ENCODE measurements at regions of chr3 and their contacts with region 1.

Region 1: DNA sequence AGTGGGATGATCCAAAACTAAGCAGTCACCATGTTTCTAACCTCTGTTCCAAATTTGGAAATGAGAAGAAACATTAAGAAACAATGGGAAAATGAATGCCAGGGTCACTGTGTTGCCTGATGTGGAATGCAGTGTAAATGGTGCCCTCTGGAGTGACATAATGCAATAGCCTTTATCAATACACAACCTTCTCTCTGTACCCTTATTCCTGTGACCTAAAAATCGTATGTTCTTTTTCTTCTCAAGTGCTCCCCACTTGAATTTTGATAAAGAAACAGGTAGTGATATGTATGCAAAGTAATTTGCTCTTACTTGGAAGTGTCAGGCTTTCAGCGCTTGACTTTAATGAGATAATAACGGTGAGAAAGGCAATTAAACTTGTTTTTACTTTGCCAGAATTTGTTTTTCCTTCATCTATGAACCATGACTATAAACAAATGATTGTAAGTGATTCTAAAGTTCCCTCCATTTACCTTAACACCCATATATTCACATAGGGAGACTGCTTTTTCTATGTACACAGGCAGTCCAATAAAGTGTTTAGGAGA is 145.8 kb upstream of the THRB start:
- DNase-seq: no peak
- H3K4me3 ChIP-seq: no peak overlapping the region
- H3K27ac ChIP-seq: no peak overlapping the region
- H3K4me1 ChIP-seq: peaks cover 0 to 16% (median 2%) of the 10 kb centered on the region in 4 donors
- H3K27me3 ChIP-seq: peaks cover 29% of the 10 kb centered on the region
- CTCF ChIP-seq: peak; percentile 35 to 66 (median 43)
- EP300 ChIP-seq: no peak
- POLR2A ChIP-seq: no peak

Region 2: GRCh38 chr3:24662449-24663345 is 22.3 kb after region 1 on chr3:
- in situ Hi-C with region 1: no loop called
- intact Hi-C with region 1: loop called (anchors 1 kb)
- DNase-seq: no peak
- H3K4me3 ChIP-seq: no peak overlapping the region
- H3K27ac ChIP-seq: no peak overlapping the region
- H3K4me1 ChIP-seq: no peaks in the 10 kb centered on the region
- H3K27me3 ChIP-seq: no peaks in the 10 kb centered on the region
- CTCF ChIP-seq: no peak
- EP300 ChIP-seq: no peak
- POLR2A ChIP-seq: no peak